ENCODE measurements at regions of chr10 and their contacts with region 1.

Region 1: DNA sequence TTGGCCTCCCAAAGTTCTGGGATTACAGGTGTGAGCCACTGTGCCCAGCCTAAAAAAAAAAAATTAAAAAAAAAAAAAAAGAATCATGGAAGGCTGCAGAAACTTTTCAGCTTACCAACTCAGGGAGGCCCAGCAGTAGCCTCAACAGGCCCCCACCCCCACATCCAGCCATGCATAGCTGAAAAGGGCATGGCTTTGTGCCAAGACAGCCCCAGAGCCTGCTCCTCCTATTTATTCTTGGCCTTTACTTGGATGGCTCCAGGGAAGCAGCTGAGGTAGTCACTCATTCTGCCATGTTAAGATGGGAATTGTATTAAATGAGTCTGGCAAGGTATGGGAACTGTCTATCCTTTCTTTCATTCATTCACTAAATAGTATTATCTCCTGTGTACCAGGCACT is 13.7 kb upstream of the CNNM2 start:
- DNase-seq: no peak
- H3K4me3 ChIP-seq: no peak overlapping the region
- H3K27ac ChIP-seq: no peak overlapping the region
- H3K4me1 ChIP-seq: no peaks in the 10 kb centered on the region
- H3K27me3 ChIP-seq: no peaks in the 10 kb centered on the region
- CTCF ChIP-seq: no peak
- POLR2A ChIP-seq: no peak

Region 2: GRCh38 chr10:102729029-102730026 is 175.0 kb before region 1 on chr10:
- intact Hi-C with region 1: loop called (anchors 10 kb)
- DNase-seq: peak; percentile 64 to 84
- H3K4me3 ChIP-seq: no peak overlapping the region
- H3K27ac ChIP-seq: no peak overlapping the region
- H3K4me1 ChIP-seq: no peaks in the 10 kb centered on the region
- H3K27me3 ChIP-seq: no peaks in the 10 kb centered on the region
- CTCF ChIP-seq: peak; percentile 70 to 91 (median 88)
- POLR2A ChIP-seq: no peak

Region 3: GRCh38 chr10:103388180-103388579 is 483.8 kb after region 1 on chr10:
- intact Hi-C with region 1: no loop called
- DNase-seq: no peak
- H3K4me3 ChIP-seq: no peak overlapping the region
- H3K27ac ChIP-seq: no peak overlapping the region
- H3K4me1 ChIP-seq: no peaks in the 10 kb centered on the region
- H3K27me3 ChIP-seq: no peaks in the 10 kb centered on the region
- CTCF ChIP-seq: no peak
- POLR2A ChIP-seq: no peak

Region 4: GRCh38 chr10:104540181-104540580 is 1635.8 kb after region 1 on chr10:
- intact Hi-C with region 1: no loop called
- DNase-seq: no peak
- H3K4me3 ChIP-seq: no peak overlapping the region
- H3K27ac ChIP-seq: no peak overlapping the region
- H3K4me1 ChIP-seq: no peaks in the 10 kb centered on the region
- H3K27me3 ChIP-seq: no peaks in the 10 kb centered on the region
- CTCF ChIP-seq: no peak
- POLR2A ChIP-seq: no peak

Measured in breast epithelium (tissue), 4 donors.